ENCODE measurements at regions of chr3 and their contacts with region 1.

Region 1: DNA sequence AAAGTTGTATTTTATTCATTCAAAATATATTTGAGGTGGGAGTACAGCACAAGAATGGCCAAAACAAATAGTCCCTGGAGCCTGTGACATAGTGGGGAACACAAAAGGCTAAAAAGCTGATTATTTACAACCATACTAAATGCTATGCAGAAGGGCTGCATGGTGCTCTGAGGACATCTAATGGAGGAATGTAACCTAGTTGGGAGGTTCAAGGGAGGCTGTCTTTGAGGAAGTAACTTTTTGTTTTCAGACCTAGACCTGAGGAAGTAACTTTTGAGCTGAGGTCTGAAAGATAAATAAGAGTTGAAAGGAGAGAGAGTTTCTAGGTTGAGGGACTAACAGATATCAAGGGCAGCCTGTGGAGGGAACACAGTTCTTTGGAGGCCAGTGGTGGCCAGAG is 34.8 kb upstream of the RASA2 start:
- DNase-seq: peak; percentile 80
- ATAC-seq: peak; percentile 90
- H3K4me3 ChIP-seq: no peak overlapping the region
- H3K27ac ChIP-seq: no peak overlapping the region
- H3K4me1 ChIP-seq: no peaks in the 10 kb centered on the region; the same call in 1 of the 2 replicates
- H3K27me3 ChIP-seq: no peaks in the 10 kb centered on the region
- CTCF ChIP-seq: peak; percentile 75 to 95 (median 89)
- EP300 ChIP-seq: no peak
- POLR2A ChIP-seq: no peak
- RAD21 ChIP-seq: peak; percentile 100

Region 2: DNA sequence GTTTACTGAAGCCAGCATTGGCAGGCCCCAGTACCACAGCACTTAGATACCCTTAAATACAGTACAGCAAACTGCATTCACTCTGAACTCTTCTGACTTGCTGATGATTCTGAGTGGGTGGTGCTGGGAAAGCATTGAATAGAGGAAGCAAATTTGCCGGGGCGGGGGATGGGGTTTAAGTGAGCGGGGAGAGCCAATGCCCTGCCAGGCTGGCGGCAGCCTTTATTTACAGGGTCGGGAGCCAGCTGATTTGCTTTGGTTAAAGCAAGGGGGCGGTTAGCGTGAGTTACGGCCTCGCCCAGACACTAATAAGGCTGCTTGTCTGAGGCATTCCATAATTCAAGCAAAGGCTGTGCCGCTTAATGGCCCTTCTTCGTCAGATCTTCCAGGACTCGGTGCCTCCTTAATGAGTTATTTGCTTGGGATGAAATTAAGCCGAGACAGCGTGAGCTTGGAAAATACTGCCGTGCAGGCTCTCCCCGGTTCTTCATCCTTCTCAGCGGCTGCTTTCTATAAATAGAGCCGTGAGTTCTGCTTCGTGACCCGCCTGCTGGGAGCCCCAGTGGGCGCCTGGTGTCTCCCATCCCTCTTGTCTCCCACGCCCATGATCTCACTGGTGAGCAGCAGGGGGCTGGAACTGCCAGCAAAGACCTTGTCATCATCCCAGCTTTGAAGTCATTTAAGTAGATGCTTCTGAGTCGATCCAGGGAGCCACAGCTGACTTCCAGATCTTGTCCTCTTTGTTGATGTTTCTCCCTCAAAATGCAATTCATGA is 375.1 kb before region 1 on chr3:
- CTCF ChIA-PET with region 1: no interaction called
- POLR2A ChIA-PET with region 1: no interaction called
- RAD21 ChIA-PET with region 1: no interaction called
- SMC1A ChIA-PET with region 1: no interaction called
- in situ Hi-C with region 1: no loop called
- intact Hi-C with region 1: no loop called
- DNase-seq: no peak
- ATAC-seq: no peak; the same call in 2 of the 3 replicates
- H3K4me3 ChIP-seq: no peak overlapping the region
- H3K27ac ChIP-seq: no peak overlapping the region
- H3K4me1 ChIP-seq: no peaks in the 10 kb centered on the region
- H3K27me3 ChIP-seq: peaks cover 0 to 5% of the 10 kb centered on the region in 2 experiments; a peak in 2 of 4 replicates
- CTCF ChIP-seq: no peak
- EP300 ChIP-seq: no peak
- POLR2A ChIP-seq: no peak
- RAD21 ChIP-seq: no peak

Region 3: GRCh38 chr3:141326123-141326522 is 125.9 kb before region 1 on chr3:
- CTCF ChIA-PET with region 1: interaction called, 11 read pairs
- POLR2A ChIA-PET with region 1: no interaction called
- RAD21 ChIA-PET with region 1: interaction called, 3 read pairs
- SMC1A ChIA-PET with region 1: interaction called, 10 read pairs
- in situ Hi-C with region 1: no loop called
- intact Hi-C with region 1: no loop called
- DNase-seq: no peak
- ATAC-seq: no peak
- H3K4me3 ChIP-seq: no peak overlapping the region
- H3K27ac ChIP-seq: no peak overlapping the region
- H3K4me1 ChIP-seq: peaks cover 19% of the 10 kb centered on the region
- H3K27me3 ChIP-seq: no peaks in the 10 kb centered on the region
- CTCF ChIP-seq: no peak
- EP300 ChIP-seq: no peak
- POLR2A ChIP-seq: no peak
- RAD21 ChIP-seq: no peak

Region 4: DNA sequence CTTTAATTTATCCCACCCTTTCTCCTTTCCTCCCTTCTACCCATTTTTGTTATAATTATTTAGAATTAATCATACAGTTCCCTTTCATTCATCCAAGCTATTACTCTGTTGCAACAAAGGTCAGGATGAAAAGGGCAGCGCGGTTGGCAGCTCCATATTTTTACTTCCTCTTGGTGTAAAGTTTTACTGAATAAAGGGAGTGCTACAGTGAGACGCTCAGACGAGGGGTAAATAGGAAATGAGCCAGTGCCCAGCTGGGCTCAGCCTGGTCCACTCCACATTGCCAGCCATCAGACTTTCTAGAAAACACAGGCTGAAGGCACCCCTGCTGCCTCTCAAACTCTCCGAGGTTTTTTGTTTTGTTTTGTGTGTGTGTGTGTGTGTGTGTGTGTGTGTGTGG is 105.6 kb before region 1 on chr3:
- CTCF ChIA-PET with region 1: interaction called, 10 read pairs
- POLR2A ChIA-PET with region 1: interaction called, 4 read pairs
- RAD21 ChIA-PET with region 1: interaction called, 8 read pairs
- SMC1A ChIA-PET with region 1: interaction called, 10 read pairs
- in situ Hi-C with region 1: no loop called
- intact Hi-C with region 1: no loop called
- DNase-seq: no peak
- ATAC-seq: peak; percentile 50
- H3K4me3 ChIP-seq: no peak overlapping the region
- H3K27ac ChIP-seq: no peak overlapping the region
- H3K4me1 ChIP-seq: peaks cover 12% of the 10 kb centered on the region; the same call in 1 of the 2 replicates
- H3K27me3 ChIP-seq: no peaks in the 10 kb centered on the region
- CTCF ChIP-seq: no peak
- EP300 ChIP-seq: no peak
- POLR2A ChIP-seq: no peak
- RAD21 ChIP-seq: no peak

Region 5: DNA sequence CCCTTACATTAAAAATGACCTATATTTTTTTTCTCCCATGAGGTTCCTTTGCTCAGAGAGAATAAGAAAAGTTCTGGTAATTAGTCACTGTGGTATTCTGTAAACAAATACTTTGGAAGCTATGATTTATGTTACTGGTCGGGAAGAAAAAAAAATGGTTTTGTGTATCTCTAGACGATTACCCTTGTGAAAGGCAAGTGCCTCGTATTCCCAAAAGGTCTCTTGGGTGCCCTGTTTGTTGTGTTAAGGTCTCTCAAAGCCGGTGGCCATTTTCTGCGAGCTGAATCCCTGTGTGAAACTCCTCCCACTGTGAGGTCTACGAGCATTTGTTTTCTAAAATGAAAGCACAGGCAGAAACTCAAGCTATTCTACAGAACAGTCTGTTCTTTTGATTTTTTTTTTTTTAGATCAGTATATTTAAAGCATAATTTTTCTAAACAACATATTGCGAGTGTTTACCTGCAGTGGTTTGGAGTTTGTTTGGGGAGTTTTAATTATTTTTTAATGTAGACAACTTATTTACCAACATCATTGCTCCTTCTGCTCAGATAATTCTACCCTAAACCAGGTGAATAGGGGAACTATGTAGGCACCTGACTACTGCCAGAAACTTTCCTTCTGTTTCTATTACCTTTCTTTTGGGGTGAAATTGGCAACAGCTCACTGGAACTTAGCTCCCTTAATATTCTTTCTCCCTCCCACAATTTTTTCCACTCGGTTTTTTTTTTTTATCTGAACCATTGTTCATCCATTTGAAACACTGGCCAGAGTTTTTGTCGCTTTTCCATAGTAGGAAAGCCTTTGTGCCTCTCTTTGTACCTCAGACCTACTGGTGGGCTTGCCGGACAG is 39.7 kb before region 1 on chr3:
- CTCF ChIA-PET with region 1: interaction called, 11 read pairs
- POLR2A ChIA-PET with region 1: interaction called, 7 read pairs
- RAD21 ChIA-PET with region 1: interaction called, 4 read pairs
- SMC1A ChIA-PET with region 1: interaction called, 31 read pairs
- in situ Hi-C with region 1: no loop called
- intact Hi-C with region 1: no loop called
- DNase-seq: no peak
- ATAC-seq: peak; percentile 63
- H3K4me3 ChIP-seq: peak overlapping the region; percentile 57
- H3K27ac ChIP-seq: peak overlapping the region; percentile 92
- H3K4me1 ChIP-seq: peaks cover 63% of the 10 kb centered on the region
- H3K27me3 ChIP-seq: no peaks in the 10 kb centered on the region
- CTCF ChIP-seq: no peak
- EP300 ChIP-seq: no peak
- POLR2A ChIP-seq: 0 out of 2 replicates have a peak, but pooled peaks have one; percentile 34
- RAD21 ChIP-seq: no peak

Region 6: DNA sequence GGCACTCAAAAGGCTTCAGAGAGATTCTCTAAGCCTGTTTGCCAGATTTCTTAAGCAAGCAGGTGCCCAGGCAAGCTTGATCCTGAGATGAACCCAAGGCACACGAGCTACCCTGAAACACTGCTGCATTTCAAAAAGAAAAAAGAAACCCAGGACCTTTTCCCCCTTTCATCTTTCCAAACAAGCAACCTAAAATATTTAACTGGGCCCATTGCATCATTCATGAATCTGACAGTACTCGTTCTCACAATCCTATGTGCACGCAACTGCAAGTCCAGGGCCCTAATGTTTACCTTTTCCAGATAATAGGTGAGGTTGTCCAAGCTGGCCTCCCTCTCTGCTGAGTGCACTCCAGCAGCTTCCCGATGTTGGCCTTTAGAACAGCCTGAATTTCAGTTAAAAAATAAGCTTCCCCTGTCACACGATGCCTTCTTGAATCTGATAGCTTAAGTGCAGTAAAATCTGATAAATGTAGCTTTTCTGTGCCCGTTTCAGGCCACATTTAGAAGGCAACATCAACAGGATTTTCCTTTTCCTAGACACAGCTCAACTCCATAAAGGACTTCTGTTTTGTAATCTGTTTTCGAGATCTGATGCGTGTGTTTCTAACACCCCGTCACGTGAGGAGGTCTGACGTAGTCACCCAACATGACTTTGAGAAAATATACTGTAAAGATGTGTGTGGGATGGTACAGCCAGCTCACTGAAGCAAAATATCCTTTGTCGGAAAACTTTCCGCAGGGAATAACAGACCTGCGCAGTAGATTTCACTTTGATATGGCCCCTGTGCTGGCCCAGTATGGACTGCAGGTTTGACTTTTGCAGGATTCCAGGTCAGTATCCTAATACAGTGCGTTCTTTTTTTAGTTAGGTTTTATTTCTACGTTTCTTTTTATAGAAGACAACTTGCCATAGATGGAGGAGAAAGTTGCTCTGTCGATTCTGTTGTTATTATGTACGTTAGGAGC is 20.3 kb before region 1 on chr3:
- CTCF ChIA-PET with region 1: interaction called, 11 read pairs
- POLR2A ChIA-PET with region 1: no interaction called
- RAD21 ChIA-PET with region 1: interaction called, 17 read pairs
- SMC1A ChIA-PET with region 1: interaction called, 25 read pairs
- in situ Hi-C with region 1: no loop called
- intact Hi-C with region 1: no loop called
- DNase-seq: no peak
- ATAC-seq: no peak
- H3K4me3 ChIP-seq: no peak overlapping the region
- H3K27ac ChIP-seq: no peak overlapping the region
- H3K4me1 ChIP-seq: peaks cover 5% of the 10 kb centered on the region; the same call in 1 of the 2 replicates
- H3K27me3 ChIP-seq: no peaks in the 10 kb centered on the region
- CTCF ChIP-seq: no peak
- EP300 ChIP-seq: no peak
- POLR2A ChIP-seq: no peak
- RAD21 ChIP-seq: no peak

Region 7: DNA sequence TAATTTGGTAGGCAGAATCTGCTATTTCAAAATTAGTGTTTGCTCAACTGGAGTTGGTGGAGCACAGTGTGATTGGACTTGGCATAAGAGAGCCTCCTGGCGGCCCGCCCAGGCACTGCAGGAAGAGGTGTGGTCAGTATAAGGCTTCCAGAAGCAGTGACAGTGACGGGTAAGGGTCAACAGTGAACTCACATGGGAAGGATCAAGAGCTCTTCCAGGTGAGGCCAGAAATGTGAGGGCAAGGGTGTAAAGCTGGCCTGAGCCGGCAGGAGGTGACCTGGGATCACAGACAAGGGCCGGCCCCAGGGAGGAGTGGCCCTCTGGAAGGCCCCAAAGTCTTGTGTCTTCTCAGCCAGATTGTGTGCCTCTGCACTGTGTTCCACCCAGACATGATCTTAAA is 192.9 kb after region 1 on chr3:
- CTCF ChIA-PET with region 1: no interaction called
- POLR2A ChIA-PET with region 1: no interaction called
- RAD21 ChIA-PET with region 1: no interaction called
- SMC1A ChIA-PET with region 1: interaction called, 3 read pairs
- in situ Hi-C with region 1: loop called (anchors 5 kb)
- intact Hi-C with region 1: no loop called
- DNase-seq: no peak
- ATAC-seq: peak; percentile 99
- H3K4me3 ChIP-seq: no peak overlapping the region
- H3K27ac ChIP-seq: no peak overlapping the region
- H3K4me1 ChIP-seq: no peaks in the 10 kb centered on the region
- H3K27me3 ChIP-seq: no peaks in the 10 kb centered on the region
- CTCF ChIP-seq: peak; percentile 78 to 97 (median 96)
- EP300 ChIP-seq: no peak
- POLR2A ChIP-seq: no peak
- RAD21 ChIP-seq: peak; percentile 71